GM18951 (cell line): ENCODE measurements at regions of chr5 and their contacts with region 1.

Region 1: DNA sequence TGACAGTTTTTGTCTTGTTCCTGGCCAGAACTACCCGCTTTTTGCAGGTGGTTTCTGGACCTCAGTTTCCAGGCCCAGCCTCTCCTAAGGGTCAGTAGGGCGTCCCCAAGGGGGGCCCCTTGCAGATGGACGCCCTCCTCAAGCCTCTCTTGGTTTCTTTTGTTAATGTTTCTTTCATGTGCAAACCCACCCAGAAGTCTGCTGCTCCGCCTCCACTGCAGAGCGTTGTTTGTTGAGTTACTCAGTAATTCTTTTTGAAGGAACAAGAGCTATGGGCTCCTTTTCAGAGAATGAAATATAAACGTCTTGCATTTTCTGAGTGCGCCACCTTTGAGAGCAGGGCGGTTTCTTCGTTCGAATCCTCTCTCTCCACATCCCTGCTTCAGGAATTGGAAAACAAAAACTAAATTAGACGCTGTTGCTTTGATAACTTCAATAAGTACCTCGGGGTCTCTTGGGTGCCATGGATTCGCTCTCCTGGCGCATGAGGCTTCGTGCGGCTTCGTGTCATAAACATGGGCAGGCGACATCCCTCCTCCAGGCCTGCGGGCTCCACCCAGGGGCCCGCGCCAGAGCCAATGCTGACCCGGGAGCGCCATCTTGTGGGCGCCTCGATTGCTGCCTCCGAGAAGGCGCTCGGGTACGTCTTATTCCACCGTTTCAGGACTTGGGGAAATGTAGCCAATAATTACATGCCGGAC is 38.3 kb upstream of the CKMT2 start:
- POLR2A ChIP-seq: no peak

Region 2: DNA sequence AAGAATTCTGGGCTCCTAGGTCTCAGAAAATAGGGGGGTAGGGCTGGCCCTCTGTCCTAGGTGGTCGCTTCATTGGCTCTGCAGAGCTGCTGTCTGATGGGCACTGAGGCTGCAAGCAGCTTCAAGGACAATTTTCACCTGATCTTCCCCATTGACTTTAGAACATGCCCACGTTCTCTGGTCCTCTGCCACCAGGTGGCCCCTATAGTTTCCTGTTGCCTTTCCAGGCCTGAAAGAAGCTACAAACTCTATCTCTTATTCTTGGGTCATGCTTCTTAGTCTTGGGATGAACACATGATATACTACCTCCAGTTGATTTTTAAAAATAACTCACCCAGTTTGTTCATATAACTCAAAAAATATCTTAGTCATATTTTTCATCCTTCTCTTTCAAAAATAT is 848.7 kb before region 1 on chr5:
- in situ Hi-C with region 1: loop called (anchors 25 kb)
- POLR2A ChIP-seq: no peak

Region 3: GRCh38 chr5:80686757-80687156 is 508.0 kb before region 1 on chr5:
- in situ Hi-C with region 1: loop called (anchors 25 kb)
- POLR2A ChIP-seq: no peak

Region 4: DNA sequence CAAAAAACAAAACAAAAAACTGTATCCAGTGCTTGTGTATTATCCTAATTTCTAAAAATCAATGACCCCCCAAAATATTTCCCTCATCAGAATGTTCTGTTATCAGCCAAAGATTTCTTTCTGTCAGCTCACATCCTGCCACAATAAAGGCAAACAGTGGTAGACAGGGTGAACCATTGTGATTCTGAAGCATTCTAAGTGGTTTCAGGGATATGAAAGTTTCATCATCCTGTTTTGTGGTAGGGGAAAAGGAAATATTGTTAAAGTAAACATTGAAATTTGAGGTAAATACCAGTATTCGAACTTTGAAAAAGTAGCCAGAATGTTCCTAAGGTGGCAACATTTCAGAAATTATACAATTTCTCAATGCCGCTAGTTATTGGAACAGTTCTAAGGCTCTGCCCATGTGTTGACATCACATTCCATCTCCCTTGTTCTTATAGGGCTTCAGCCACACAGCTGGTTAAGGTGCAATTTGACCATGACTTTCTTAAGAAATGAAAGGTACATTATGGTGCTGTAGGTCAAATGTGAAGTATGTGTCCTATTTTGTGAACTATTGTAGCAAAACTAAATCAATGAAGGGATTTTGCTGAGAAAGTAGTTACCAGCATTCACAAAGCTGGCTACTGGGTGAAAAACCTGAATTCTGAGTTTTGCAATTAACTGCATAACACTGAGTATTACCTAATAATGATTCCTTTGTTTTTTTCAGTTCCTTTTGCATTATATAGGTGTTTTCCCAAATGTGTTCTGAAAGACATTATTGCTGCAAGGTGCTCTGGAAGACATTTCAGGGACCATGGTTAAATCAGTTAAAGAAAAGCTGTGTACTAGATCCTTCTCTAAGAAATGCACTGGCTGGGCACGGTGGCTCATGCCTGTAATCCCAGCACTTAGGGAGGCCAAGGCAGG is 342.2 kb before region 1 on chr5:
- in situ Hi-C with region 1: no loop called
- POLR2A ChIP-seq: no peak